ENCODE measurements at regions of chr4 and their contacts with region 1.

Region 1: DNA sequence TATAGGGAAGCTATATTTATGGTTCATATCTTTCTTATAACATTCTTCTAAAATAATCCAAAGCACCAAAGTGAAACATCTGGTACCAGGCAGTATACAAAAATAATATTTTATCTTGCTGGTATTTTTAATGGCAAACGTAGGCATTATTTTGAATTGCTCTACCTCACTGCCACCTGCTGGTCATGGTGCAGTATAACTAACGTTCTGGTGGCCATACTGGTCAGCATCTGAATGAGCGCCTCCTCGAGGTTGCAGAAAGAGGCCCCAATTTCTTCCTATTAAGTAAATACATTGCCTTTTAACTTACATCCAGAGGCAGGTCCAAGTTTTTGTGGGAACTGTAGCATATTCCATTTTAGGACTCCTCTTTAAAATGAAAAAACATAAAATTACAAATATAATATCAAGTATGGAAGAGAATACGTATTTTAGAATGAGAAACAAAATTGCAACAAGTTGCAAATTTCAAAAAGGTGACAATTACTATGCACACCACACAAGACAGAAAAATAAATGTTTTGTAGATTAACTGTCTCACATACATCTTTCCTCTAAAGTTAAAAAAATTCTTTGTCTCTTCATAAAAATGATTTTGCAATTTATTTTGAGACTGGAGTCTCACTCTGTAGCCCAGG is 22.9 kb upstream of the CWH43 start:
- DNase-seq: peak; percentile 90
- ATAC-seq: peak; percentile 98
- H3K4me3 ChIP-seq: no peak overlapping the region
- H3K27ac ChIP-seq: no peak overlapping the region
- H3K4me1 ChIP-seq: peaks cover 2% of the 10 kb centered on the region; the same call in 1 of the 2 replicates
- H3K27me3 ChIP-seq: peaks cover 2% of the 10 kb centered on the region; the same call in 1 of the 2 replicates
- CTCF ChIP-seq: peak; percentile 100
- POLR2A ChIP-seq: peak; percentile 60; the same call in 1 of the 2 replicates
- RAD21 ChIP-seq: peak; percentile 98

Region 2: GRCh38 chr4:48315728-48316630 is 647.2 kb before region 1 on chr4:
- CTCF ChIA-PET with region 1: no interaction called
- POLR2A ChIA-PET with region 1: no interaction called
- dilution Hi-C with region 1: no loop called
- in situ Hi-C with region 1: loop called (anchors 25 kb)
- intact Hi-C with region 1: no loop called
- DNase-seq: peak; percentile 73
- ATAC-seq: peak; percentile 89
- H3K4me3 ChIP-seq: no peak overlapping the region
- H3K27ac ChIP-seq: no peak overlapping the region
- H3K4me1 ChIP-seq: no peaks in the 10 kb centered on the region
- H3K27me3 ChIP-seq: no peaks in the 10 kb centered on the region
- CTCF ChIP-seq: peak; percentile 67
- POLR2A ChIP-seq: no peak
- RAD21 ChIP-seq: peak; percentile 74

Region 3: GRCh38 chr4:48578132-48578968 is 384.8 kb before region 1 on chr4:
- CTCF ChIA-PET with region 1: interaction called, 4 read pairs
- POLR2A ChIA-PET with region 1: no interaction called
- dilution Hi-C with region 1: no loop called
- in situ Hi-C with region 1: no loop called
- intact Hi-C with region 1: loop called (anchors 1 kb)
- DNase-seq: peak; percentile 78
- ATAC-seq: peak; percentile 99
- H3K4me3 ChIP-seq: no peak overlapping the region
- H3K27ac ChIP-seq: no peak overlapping the region
- H3K4me1 ChIP-seq: no peaks in the 10 kb centered on the region
- H3K27me3 ChIP-seq: no peaks in the 10 kb centered on the region
- CTCF ChIP-seq: peak; percentile 87
- POLR2A ChIP-seq: no peak
- RAD21 ChIP-seq: peak; percentile 86

Region 4: DNA sequence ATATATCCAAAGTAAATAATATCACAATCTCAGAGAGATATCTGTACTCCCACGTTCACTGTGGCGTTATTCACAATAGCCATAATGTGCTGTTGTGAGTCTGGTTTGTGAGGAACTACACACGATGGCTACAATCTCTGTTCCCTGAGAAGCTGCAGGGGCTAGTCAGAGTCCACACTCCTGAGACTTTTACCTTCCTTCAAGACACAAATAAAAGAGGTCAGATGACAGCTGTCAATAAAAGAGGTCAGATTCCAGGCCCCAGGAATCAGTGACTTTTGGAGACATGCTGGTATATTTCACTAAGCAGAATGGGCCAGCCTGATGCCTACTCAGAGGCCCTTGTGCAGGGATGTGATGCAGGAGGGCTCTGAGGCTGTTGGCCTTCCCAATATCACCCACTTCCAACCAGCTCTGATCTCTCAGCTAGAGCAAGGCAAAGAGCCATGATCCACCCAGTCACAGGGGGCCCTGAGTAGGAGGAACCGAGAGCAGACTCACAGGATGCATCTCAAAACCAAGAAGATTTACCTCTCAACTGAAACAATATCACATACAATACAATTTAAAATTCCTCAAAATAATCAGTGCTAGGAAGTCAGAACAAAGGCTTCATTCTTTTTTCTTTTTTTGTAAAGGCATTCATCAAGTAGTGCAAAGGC is 196.9 kb before region 1 on chr4:
- CTCF ChIA-PET with region 1: no interaction called
- POLR2A ChIA-PET with region 1: no interaction called
- dilution Hi-C with region 1: no loop called
- in situ Hi-C with region 1: no loop called
- intact Hi-C with region 1: no loop called
- DNase-seq: no peak
- ATAC-seq: no peak
- H3K4me3 ChIP-seq: no peak overlapping the region
- H3K27ac ChIP-seq: no peak overlapping the region
- H3K4me1 ChIP-seq: peaks cover 7% of the 10 kb centered on the region; the same call in 1 of the 2 replicates
- H3K27me3 ChIP-seq: no peaks in the 10 kb centered on the region
- CTCF ChIP-seq: no peak
- POLR2A ChIP-seq: no peak
- RAD21 ChIP-seq: no peak

Region 5: DNA sequence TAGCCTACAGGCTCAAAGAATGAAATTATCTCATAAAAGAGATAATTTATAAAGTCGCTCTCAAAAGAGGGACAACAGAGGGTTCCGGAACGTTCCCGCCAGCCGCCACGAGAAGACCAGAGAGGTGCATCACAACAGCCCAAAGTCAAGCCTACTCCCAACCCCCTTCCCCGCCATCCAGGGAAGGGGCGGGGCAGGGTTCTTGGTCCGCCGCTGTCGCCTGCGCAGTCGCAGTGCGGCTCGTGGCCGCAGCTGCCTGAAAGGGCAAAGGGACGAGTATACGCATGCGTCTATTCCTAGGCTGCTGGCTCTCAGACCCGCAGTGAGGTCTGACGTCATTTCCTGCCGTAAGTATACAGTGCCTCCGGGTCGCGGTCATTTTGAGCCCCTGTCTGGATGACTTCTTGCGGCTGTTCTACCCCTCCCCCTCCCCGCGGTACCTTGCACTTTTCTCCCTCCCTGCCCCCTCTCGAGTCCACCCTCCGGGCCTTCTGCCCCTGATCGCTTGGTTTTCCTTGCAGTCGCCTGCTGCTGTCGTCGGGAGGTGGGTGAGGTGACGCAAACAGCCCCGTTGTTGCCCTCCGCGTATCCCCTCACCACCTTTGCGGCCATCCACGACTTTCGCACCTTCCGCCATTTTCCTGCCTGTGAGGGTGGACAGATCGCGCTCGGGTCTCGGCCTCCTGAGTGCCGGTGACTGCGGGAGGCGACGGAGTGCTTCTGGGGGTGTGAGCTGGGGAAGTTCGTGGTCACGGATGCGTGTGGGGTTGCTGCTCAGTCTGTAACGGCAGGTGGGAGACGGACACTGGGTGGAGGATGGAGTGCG is 132.2 kb before region 1 on chr4 and contains the start of gene OCIAD1:
- CTCF ChIA-PET with region 1: no interaction called
- POLR2A ChIA-PET with region 1: no interaction called
- dilution Hi-C with region 1: no loop called
- in situ Hi-C with region 1: no loop called
- intact Hi-C with region 1: loop called (anchors 5 kb)
- DNase-seq: peak; percentile 100
- ATAC-seq: peak; percentile 98
- H3K4me3 ChIP-seq: peak within 1 kb of the TSS; percentile 76
- H3K27ac ChIP-seq: peak within 1 kb of the TSS; percentile 98
- H3K4me1 ChIP-seq: no peaks in the 10 kb centered on the region
- H3K27me3 ChIP-seq: no peaks in the 10 kb centered on the region
- CTCF ChIP-seq: no peak
- POLR2A ChIP-seq: peak; percentile 71
- RAD21 ChIP-seq: no peak
- total RNA-seq, gene OCIAD1: 86.9 and 106 TPM in 2 replicates

Region 6: GRCh38 chr4:48906206-48907173 is 56.7 kb before region 1 on chr4 and contains the start of gene OCIAD2:
- CTCF ChIA-PET with region 1: no interaction called
- POLR2A ChIA-PET with region 1: no interaction called
- dilution Hi-C with region 1: no loop called
- in situ Hi-C with region 1: no loop called
- intact Hi-C with region 1: loop called (anchors 5 kb)
- DNase-seq: no peak
- ATAC-seq: peak; percentile 5; the same call in 1 of the 2 replicates
- H3K4me3 ChIP-seq: peak within 1 kb of the TSS; percentile 32
- H3K27ac ChIP-seq: no peak within 1 kb of the TSS; the same call in 1 of the 2 replicates
- H3K4me1 ChIP-seq: peaks cover 1% of the 10 kb centered on the region; the same call in 1 of the 2 replicates
- H3K27me3 ChIP-seq: no peaks in the 10 kb centered on the region
- CTCF ChIP-seq: no peak
- POLR2A ChIP-seq: no peak
- RAD21 ChIP-seq: no peak
- total RNA-seq, gene OCIAD2: 16.5 and 19.2 TPM in 2 replicates

Region 7: DNA sequence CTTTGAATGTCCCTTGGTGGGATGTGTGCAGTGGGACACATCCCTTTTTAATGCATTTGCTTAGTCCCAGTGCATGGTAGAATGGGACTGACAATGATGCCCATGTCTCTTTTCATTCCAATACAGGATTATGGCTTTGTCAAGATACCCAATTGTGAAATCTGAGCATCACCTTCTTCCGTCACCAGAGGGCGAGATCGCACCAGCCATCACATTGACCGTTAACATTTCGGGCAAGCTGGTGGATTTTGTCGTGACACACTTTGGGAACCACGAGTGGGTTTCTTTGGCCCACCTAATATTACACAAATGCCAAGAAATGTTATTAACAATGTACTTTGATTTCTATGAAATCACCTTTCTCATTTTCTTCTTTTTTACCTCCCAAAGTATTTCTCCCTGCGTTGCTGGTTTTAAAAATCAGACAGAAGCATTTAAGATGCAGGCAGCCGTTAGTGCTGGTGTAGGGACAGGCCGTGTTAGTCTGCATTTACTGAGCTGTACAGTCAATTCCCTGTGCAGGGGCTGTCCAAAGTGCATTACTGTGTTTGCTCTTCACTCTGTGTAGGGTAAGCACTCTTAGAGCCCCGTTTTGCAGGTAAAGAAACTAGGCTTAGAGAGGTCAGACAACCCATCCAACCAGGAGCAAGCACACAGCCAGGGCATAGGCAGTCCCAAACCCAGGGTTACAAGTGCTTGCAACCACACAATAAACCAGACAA is 69.4 kb after region 1 on chr4:
- CTCF ChIA-PET with region 1: no interaction called
- POLR2A ChIA-PET with region 1: no interaction called
- dilution Hi-C with region 1: no loop called
- in situ Hi-C with region 1: no loop called
- intact Hi-C with region 1: no loop called
- DNase-seq: peak; percentile 6
- ATAC-seq: peak; percentile 61; the same call in 1 of the 2 replicates
- H3K4me3 ChIP-seq: no peak overlapping the region
- H3K27ac ChIP-seq: no peak overlapping the region
- H3K4me1 ChIP-seq: no peaks in the 10 kb centered on the region
- H3K27me3 ChIP-seq: no peaks in the 10 kb centered on the region
- CTCF ChIP-seq: peak; percentile 45
- POLR2A ChIP-seq: no peak
- RAD21 ChIP-seq: peak; percentile 63